ENCODE measurements at regions of chr1 and their contacts with region 1.

Region 1: GRCh38 chr1:155050560-155051341 is at the start of gene ADAM15:
- DNase-seq: peak; percentile 74 to 79 (median 77)
- H3K4me3 ChIP-seq: peak within 1 kb of the TSS; percentile 69 to 92
- H3K4me3 Mint-ChIP-seq: peak within 1 kb of the TSS; percentile 86 to 92 (median 88)
- H3K27ac ChIP-seq: peak within 1 kb of the TSS; percentile 71
- H3K27ac Mint-ChIP-seq: peak within 1 kb of the TSS; percentile 70 to 93 (median 90)
- H3K4me1 ChIP-seq: peaks cover 27% of the 10 kb centered on the region
- H3K4me1 Mint-ChIP-seq: peaks cover 14 to 33% (median 27%) of the 10 kb centered on the region in 4 donors
- H3K27me3 ChIP-seq: no peaks in the 10 kb centered on the region
- H3K27me3 Mint-ChIP-seq: no peaks in the 10 kb centered on the region
- total RNA-seq, gene ADAM15: 33.6 to 39.8 TPM

Region 2: GRCh38 chr1:154609398-154610380 is 441.1 kb before region 1 on chr1:
- CTCF ChIA-PET with region 1: no interaction called
- POLR2A ChIA-PET with region 1: no interaction called
- intact Hi-C with region 1: no loop called
- DNase-seq: peak; percentile 60 to 91 (median 65)
- H3K4me3 ChIP-seq: peak overlapping the region; percentile 34 to 94
- H3K4me3 Mint-ChIP-seq: peak overlapping the region; percentile 93 to 99 (median 98)
- H3K27ac ChIP-seq: peak overlapping the region; percentile 97
- H3K27ac Mint-ChIP-seq: peak overlapping the region; percentile 93 to 100 (median 98)
- H3K4me1 ChIP-seq: peaks cover 41% of the 10 kb centered on the region
- H3K4me1 Mint-ChIP-seq: peaks cover 38 to 76% (median 53%) of the 10 kb centered on the region in 4 donors
- H3K27me3 ChIP-seq: no peaks in the 10 kb centered on the region
- H3K27me3 Mint-ChIP-seq: no peaks in the 10 kb centered on the region

Region 3: DNA sequence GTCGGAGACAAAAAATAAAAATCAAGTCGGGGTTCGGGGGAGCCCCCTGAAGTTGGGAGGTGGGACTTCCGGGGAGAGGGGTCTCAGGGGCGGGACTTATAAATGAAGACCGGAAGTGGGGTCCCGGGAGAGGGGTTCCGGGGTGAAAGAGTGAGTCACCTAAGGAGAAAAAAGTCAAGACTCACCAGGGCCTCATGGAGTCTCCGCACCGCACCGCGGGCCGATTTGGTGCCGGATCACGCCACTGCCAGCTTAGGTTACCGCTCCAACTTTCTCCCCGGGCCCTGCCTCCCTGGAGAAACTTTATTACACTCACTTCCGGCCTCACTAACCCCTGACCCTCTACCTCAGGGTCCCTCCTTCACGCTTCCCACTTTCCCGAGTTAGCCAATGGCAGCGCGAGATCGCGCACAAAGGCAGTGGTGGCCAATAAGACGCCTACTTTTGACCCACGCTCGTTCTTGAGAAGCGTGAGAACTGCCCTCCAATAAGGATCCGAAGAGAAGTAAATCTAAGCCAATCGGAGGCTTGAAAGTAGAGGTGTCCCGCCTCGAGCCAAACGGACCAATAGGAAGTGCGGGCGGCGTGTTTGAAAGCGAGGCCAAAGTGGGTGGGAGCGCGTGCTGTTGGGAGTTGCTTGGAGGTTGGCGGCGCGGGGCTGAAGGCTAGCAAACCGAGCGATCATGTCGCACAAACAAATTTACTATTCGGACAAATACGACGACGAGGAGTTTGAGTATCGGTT is 76.5 kb before region 1 on chr1 and contains the start of gene CKS1B:
- CTCF ChIA-PET with region 1: interaction called, 3 read pairs
- POLR2A ChIA-PET with region 1: interaction called, 9 read pairs
- intact Hi-C with region 1: loop called (anchors 2 kb)
- DNase-seq: peak; percentile 99
- H3K4me3 ChIP-seq: peak within 1 kb of the TSS; percentile 67 to 100
- H3K4me3 Mint-ChIP-seq: no peak within 1 kb of the TSS
- H3K27ac ChIP-seq: peak within 1 kb of the TSS; percentile 95
- H3K27ac Mint-ChIP-seq: no peak within 1 kb of the TSS
- H3K4me1 ChIP-seq: peaks cover 45% of the 10 kb centered on the region
- H3K4me1 Mint-ChIP-seq: peaks cover 22 to 39% (median 26%) of the 10 kb centered on the region in 4 donors
- H3K27me3 ChIP-seq: no peaks in the 10 kb centered on the region
- H3K27me3 Mint-ChIP-seq: no peaks in the 10 kb centered on the region
- total RNA-seq, gene CKS1B: 12.2 to 13.0 TPM

Region 4: DNA sequence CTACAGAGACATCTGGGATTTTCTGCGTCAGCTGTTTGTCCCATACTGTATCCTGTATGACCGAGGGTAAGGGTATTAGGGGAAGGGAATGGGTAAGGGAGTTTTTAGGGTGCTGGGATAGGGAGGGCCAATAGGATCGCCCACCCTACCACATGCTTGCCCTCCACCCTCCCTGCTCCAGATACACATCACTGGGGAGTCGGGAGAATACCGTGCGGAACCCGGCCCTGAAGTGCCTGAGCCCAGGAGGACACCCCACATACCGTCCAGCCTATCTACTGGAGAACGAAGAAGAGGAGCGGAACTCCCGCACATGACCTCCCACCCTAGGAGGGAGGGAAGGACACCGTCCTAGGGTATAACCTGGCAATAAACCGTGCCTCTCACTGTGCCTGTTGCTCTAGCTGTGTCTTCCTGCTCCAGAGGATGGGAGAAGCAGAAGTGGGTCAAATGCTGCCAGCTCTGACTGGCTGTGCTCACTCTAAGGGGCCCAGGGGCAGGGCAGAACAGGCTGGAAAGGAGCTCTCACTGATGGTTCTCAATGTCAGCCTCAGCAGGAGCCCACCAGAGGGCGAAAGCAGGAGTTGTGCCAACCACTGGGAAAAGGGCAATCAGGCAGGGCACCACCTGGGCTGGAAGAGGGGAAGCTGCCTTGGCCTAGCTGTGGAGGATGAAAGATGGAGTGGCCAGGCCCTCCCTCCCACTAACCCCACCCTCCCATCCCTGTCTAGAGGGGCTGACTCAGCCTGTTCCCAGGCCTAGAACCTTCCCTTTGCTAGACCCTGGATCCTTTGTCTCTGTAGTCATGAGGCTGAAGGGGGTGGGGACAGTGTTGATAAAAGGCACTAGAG is 57.8 kb before region 1 on chr1:
- CTCF ChIA-PET with region 1: interaction called, 10 read pairs
- POLR2A ChIA-PET with region 1: interaction called, 3 read pairs
- intact Hi-C with region 1: no loop called
- DNase-seq: no peak
- H3K4me3 ChIP-seq: no peak overlapping the region
- H3K4me3 Mint-ChIP-seq: no peak overlapping the region
- H3K27ac ChIP-seq: no peak overlapping the region
- H3K27ac Mint-ChIP-seq: peak overlapping the region in 1 of 7 donors; percentile 47
- H3K4me1 ChIP-seq: peaks cover 24% of the 10 kb centered on the region
- H3K4me1 Mint-ChIP-seq: peaks cover 14 to 32% (median 23%) of the 10 kb centered on the region in 4 donors
- H3K27me3 ChIP-seq: no peaks in the 10 kb centered on the region
- H3K27me3 Mint-ChIP-seq: no peaks in the 10 kb centered on the region

Region 5: GRCh38 chr1:155063550-155064110 is 12.9 kb after region 1 on chr1 and contains the start of gene EFNA4:
- CTCF ChIA-PET with region 1: interaction called, 203 read pairs
- POLR2A ChIA-PET with region 1: interaction called, 83 read pairs
- intact Hi-C with region 1: loop called (anchors 1 kb)
- DNase-seq: peak; percentile 83 to 87 (median 86)
- H3K4me3 ChIP-seq: peak within 1 kb of the TSS; percentile 63 to 70
- H3K4me3 Mint-ChIP-seq: peak within 1 kb of the TSS; percentile 91 to 99 (median 94)
- H3K27ac ChIP-seq: peak within 1 kb of the TSS; percentile 51
- H3K27ac Mint-ChIP-seq: peak within 1 kb of the TSS; percentile 81 to 94 (median 85)
- H3K4me1 ChIP-seq: peaks cover 35% of the 10 kb centered on the region
- H3K4me1 Mint-ChIP-seq: peaks cover 23 to 52% (median 32%) of the 10 kb centered on the region in 4 donors
- H3K27me3 ChIP-seq: no peaks in the 10 kb centered on the region
- H3K27me3 Mint-ChIP-seq: no peaks in the 10 kb centered on the region
- total RNA-seq, gene EFNA4: 6.0 to 8.5 TPM

Measured in CD4-positive, alpha-beta memory T cell (primary cell).